Activated CD8-positive, alpha-beta T cell treated with anti-CD3 and anti-CD28 coated beads for 36 hours (primary cell): ENCODE measurements at regions of chr7 and their contacts with region 1.

Region 1: DNA sequence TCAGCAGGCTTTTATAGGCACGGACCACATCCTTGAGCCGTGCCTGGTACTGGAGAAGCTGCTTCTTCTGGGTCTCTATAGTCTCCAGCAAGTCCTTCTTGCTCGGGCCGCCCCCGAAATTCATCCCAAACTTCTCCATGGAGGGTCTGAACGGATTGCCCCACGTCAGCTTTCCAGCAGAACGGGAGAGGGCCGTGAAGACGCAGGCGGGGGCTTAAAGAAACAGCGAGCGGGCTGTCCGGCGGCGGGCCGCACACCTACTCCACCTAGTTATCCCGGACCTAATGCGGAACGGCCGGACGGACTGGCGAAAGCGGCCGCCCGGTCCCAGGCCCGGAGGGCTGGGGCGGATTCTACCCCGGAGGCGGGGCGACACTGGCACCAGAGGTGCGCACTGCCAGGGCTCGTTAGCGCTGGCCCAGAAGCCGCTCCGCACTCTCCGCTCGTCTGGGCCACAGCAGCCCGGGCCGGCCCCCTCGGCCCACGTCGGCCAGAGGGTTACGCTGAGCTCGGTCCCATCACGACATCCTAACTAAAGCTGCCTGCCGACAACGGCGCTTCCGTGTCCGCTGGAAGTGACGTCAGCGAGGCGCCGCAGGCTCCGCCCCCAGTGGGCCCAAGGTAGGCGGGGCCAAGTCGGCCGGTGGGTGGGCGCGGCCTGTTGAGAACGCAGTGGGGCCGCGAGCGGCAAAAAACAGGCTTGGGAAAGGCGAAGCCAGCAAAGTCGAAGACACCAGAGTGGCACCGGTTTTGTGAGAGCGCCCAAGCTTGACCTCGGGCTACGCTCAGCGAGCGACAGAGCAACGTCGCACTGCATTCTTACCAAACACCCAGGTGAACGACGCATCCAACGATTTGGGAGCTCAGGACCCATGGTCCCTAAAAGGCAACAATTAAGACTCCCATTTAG is at the start of gene GCC1:
- DNase-seq: peak; percentile 95
- ATAC-seq: peak; percentile 86
- H3K4me3 Mint-ChIP-seq: peak within 1 kb of the TSS; percentile 87
- H3K27ac Mint-ChIP-seq: peak within 1 kb of the TSS; percentile 87
- H3K4me1 Mint-ChIP-seq: peaks cover 59% of the 10 kb centered on the region
- H3K27me3 Mint-ChIP-seq: no peaks in the 10 kb centered on the region
- CTCF ChIP-seq: no peak
- total RNA-seq, gene GCC1: 12.4 to 12.5 TPM

Region 2: GRCh38 chr7:127571741-127572505 is 13.4 kb before region 1 on chr7:
- CTCF ChIA-PET with region 1: no interaction called
- POLR2A ChIA-PET with region 1: no interaction called
- intact Hi-C with region 1: no loop called
- DNase-seq: no peak
- ATAC-seq: no peak
- H3K4me3 Mint-ChIP-seq: no peak overlapping the region
- H3K27ac Mint-ChIP-seq: no peak overlapping the region
- H3K4me1 Mint-ChIP-seq: no peaks in the 10 kb centered on the region
- H3K27me3 Mint-ChIP-seq: no peaks in the 10 kb centered on the region
- CTCF ChIP-seq: no peak

Region 3: DNA sequence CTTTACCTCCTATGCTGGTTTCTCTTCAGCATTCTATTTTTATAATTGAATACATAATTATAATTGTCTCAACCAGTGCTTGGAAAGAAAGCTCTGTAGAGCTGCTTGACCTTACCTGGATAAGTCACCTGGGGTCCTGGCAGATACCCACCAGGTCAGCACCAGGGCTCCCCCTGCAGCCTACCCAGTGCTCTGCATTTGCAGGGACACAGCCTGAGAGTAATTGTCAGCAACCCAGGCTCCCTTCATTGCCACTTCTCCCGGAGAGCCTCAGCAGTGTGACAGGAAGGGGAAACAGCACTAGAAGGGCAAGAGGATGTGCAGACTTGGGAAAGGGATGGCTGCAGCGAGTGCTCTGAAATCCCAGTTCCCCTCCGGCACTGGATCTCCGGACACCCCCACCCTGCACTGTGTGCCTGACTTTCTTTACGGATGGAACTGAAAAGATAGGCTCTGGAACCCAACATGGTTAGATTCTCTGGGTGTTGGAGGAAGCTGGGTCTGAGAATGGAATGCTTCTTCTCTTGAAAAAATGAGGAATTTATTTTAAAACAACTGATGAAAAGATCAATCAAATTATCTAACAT is 44.1 kb after region 1 on chr7:
- CTCF ChIA-PET with region 1: interaction called, 10 read pairs
- POLR2A ChIA-PET with region 1: no interaction called
- intact Hi-C with region 1: no loop called
- DNase-seq: peak; percentile 59
- ATAC-seq: peak; percentile 83
- H3K4me3 Mint-ChIP-seq: no peak overlapping the region
- H3K27ac Mint-ChIP-seq: no peak overlapping the region
- H3K4me1 Mint-ChIP-seq: no peaks in the 10 kb centered on the region
- H3K27me3 Mint-ChIP-seq: peaks cover 20% of the 10 kb centered on the region
- CTCF ChIP-seq: peak; percentile 69

Region 4: DNA sequence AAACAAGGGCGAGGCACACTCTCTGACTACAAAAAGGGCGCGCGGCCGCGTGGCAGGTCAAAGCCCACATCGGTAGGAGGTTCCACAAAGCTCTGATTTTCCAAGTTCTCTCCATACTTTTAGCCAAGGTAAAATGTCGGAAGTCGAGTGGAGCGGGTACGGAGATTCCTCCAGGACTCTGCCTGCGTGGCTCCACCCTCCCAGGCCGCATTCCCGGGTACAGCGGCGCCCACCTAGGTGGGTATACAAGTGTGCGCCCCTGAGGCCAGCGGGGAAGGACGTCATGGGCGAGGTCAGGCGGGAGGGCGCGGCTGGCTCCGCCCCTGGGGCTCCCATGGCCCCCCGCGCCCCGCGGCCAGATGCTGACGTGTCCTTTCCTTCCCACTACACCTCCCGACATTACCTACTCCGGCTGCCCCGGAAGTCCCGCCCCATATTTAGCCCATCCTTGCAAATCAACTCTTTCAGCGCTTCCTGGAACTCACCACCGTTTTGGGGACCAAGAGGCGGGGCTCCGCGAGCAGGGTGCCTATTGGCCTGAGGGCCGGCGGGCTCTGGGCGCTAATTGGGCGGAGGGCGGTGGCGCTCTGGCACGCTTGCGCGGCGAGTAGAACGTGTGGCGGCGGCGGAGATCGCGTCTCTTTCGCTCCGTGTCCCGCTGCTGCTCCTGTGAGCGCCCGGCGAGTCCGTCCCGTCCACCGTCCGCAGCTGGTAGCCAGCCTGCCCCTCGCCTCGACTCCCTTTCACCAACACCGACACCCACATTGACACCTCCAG is 66.4 kb after region 1 on chr7 and contains the start of gene SND1:
- CTCF ChIA-PET with region 1: interaction called, 3 read pairs
- POLR2A ChIA-PET with region 1: interaction called, 11 read pairs
- intact Hi-C with region 1: no loop called
- DNase-seq: peak; percentile 99
- ATAC-seq: peak; percentile 95
- H3K4me3 Mint-ChIP-seq: no peak within 1 kb of the TSS
- H3K27ac Mint-ChIP-seq: peak within 1 kb of the TSS; percentile 89
- H3K4me1 Mint-ChIP-seq: peaks cover 28% of the 10 kb centered on the region
- H3K27me3 Mint-ChIP-seq: no peaks in the 10 kb centered on the region
- CTCF ChIP-seq: no peak
- total RNA-seq, gene SND1: 206 to 208 TPM

Region 5: GRCh38 chr7:127885843-127886242 is 300.5 kb after region 1 on chr7:
- CTCF ChIA-PET with region 1: no interaction called
- POLR2A ChIA-PET with region 1: no interaction called
- intact Hi-C with region 1: no loop called
- DNase-seq: no peak
- ATAC-seq: no peak
- H3K4me3 Mint-ChIP-seq: no peak overlapping the region
- H3K27ac Mint-ChIP-seq: no peak overlapping the region
- H3K4me1 Mint-ChIP-seq: peaks cover 18% of the 10 kb centered on the region
- H3K27me3 Mint-ChIP-seq: no peaks in the 10 kb centered on the region
- CTCF ChIP-seq: no peak